HepG2 (cell line): ENCODE measurements at regions of chr5 and their contacts with region 1.

Region 1: DNA sequence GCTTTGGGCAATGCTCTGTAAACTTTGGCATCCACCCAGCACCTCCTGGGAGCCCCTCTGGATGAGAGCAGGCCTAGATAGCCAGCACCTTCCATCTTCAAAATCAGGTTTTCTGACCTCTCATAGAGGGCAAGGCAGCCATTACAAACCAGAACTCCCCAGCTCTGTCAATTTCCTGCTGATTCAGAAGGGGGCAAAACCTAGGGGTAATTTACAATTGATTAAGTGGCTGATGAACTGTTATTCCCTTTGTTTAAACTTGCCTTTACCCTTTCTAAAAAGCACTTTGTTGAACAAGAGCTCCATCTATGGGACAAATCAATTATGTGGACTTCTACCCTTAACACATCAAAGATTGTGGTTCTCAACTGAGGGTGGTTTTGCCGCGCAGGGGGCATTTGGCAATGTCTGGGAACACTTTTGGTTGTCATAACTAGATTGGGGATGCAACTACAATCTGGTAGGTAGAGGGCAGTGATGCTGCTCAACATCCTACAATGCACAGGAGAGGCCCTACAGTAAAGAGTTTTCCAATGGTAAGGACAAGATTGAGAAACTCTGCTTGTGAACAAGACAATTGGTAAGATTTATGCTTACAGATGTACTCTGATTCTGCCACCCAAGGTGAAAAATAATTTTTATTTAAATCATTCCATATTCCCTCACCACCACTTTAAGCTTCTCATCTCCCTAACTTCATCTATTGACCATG is 184.1 kb downstream of the MARCHF11 start:
- DNase-seq: peak; percentile 5
- ATAC-seq: peak; percentile 66
- H3K4me3 ChIP-seq: no peak overlapping the region
- H3K27ac ChIP-seq: no peak overlapping the region
- H3K4me1 ChIP-seq: no peaks in the 10 kb centered on the region
- H3K27me3 ChIP-seq: no peaks in the 10 kb centered on the region
- CTCF ChIP-seq: peak; percentile 45
- EP300 ChIP-seq: no peak
- POLR2A ChIP-seq: no peak
- RAD21 ChIP-seq: no peak

Region 2: DNA sequence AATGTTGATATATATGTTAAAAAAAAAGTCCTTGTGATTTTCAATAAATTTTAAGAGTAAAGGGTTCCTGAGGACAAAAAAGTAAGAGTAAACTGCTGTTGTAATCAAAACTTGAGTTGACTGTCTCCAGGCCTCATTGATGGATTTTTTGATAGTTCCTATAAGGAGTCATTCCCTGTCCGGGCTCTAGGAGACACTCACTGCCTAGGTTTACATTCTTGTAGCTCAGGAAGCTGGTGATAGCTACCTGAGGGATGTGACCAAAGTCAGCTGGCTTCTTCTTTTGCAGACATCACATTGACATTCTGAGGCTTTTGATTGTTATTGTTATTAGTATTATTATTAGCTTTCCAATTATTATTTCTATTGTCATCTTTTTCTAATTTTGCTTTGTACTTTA is 612.0 kb before region 1 on chr5:
- CTCF ChIA-PET with region 1: no interaction called
- POLR2A ChIA-PET with region 1: no interaction called
- in situ Hi-C with region 1: no loop called
- intact Hi-C with region 1: loop called (anchors 10 kb)
- DNase-seq: peak; percentile 3
- ATAC-seq: peak; percentile 64; the same call in 2 of the 3 replicates
- H3K4me3 ChIP-seq: no peak overlapping the region
- H3K27ac ChIP-seq: no peak overlapping the region
- H3K4me1 ChIP-seq: peaks cover 13% of the 10 kb centered on the region; the same call in 1 of the 2 replicates
- H3K27me3 ChIP-seq: no peaks in the 10 kb centered on the region
- CTCF ChIP-seq: peak; percentile 24; the same call in 1 of the 2 replicates
- EP300 ChIP-seq: no peak
- POLR2A ChIP-seq: no peak
- RAD21 ChIP-seq: no peak

Region 3: GRCh38 chr5:15683332-15683731 is 312.2 kb before region 1 on chr5:
- CTCF ChIA-PET with region 1: interaction called, 3 read pairs
- POLR2A ChIA-PET with region 1: no interaction called
- in situ Hi-C with region 1: no loop called
- intact Hi-C with region 1: loop called (anchors 2 kb)
- DNase-seq: peak; percentile 2
- ATAC-seq: peak; percentile 82
- H3K4me3 ChIP-seq: no peak overlapping the region
- H3K27ac ChIP-seq: no peak overlapping the region
- H3K4me1 ChIP-seq: no peaks in the 10 kb centered on the region
- H3K27me3 ChIP-seq: no peaks in the 10 kb centered on the region
- CTCF ChIP-seq: 0 out of 2 replicates have a peak, but pooled peaks have one; percentile 19
- EP300 ChIP-seq: no peak
- POLR2A ChIP-seq: no peak
- RAD21 ChIP-seq: no peak